ENCODE measurements at regions of chr6 and their contacts with region 1.

Region 1: GRCh38 chr6:28940858-28941680 is 17.3 kb upstream of the TRIM27 start:
- DNase-seq: peak; percentile 89
- ATAC-seq: peak; percentile 76
- H3K4me3 Mint-ChIP-seq: peak overlapping the region; percentile 89
- H3K27ac Mint-ChIP-seq: peak overlapping the region; percentile 96
- H3K4me1 Mint-ChIP-seq: peaks cover 44% of the 10 kb centered on the region
- H3K27me3 Mint-ChIP-seq: no peaks in the 10 kb centered on the region

Region 2: DNA sequence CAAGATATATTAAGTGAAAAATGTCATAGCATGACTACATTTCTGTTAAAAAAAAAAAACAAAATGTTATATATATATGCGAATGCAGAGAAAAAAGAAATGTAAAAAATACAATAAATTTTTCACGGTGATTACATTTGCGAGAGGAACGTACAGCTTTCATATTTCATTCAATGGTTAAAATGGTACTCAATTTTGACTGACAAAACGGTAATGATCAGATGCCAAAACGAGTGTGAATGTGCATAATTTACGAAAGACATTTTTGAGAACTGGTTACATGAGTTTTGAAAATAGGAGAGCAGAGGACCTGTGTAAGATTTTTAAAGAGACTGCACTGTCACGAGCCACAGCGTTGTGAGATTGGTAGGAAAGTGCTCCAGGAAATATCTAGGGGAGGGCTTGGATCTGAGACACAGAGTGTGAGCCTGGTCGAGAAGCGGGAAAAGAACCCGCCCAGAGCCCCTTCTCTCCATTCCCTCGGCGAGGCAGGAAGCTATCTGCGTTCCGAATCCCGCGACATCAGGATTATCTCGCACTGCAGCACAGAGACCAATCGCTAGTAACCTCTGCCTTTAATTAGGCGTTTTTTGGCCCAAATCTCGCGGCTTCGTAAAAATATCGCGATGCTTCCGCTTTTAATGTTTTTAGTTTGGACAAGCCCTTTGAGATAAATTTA is 45.8 kb before region 1 on chr6:
- CTCF ChIA-PET with region 1: interaction called, 23 read pairs
- DNase-seq: peak; percentile 97
- ATAC-seq: peak; percentile 85
- H3K4me3 Mint-ChIP-seq: peak overlapping the region; percentile 99
- H3K27ac Mint-ChIP-seq: peak overlapping the region; percentile 100
- H3K4me1 Mint-ChIP-seq: peaks cover 12% of the 10 kb centered on the region
- H3K27me3 Mint-ChIP-seq: no peaks in the 10 kb centered on the region

Region 3: GRCh38 chr6:28923318-28924102 is 17.6 kb before region 1 on chr6 and contains the start of gene TRIM27:
- CTCF ChIA-PET with region 1: interaction called, 44 read pairs
- DNase-seq: peak; percentile 86
- ATAC-seq: peak; percentile 86
- H3K4me3 Mint-ChIP-seq: peak within 1 kb of the TSS; percentile 93
- H3K27ac Mint-ChIP-seq: peak within 1 kb of the TSS; percentile 93
- H3K4me1 Mint-ChIP-seq: peaks cover 41% of the 10 kb centered on the region
- H3K27me3 Mint-ChIP-seq: peaks cover 3% of the 10 kb centered on the region
- total RNA-seq, gene TRIM27: 52.5 to 62.9 TPM

Region 4: GRCh38 chr6:28981833-28982475 is 40.9 kb after region 1 on chr6:
- CTCF ChIA-PET with region 1: interaction called, 10 read pairs
- DNase-seq: peak; percentile 79
- ATAC-seq: peak; percentile 70
- H3K4me3 Mint-ChIP-seq: peak overlapping the region; percentile 90
- H3K27ac Mint-ChIP-seq: peak overlapping the region; percentile 86
- H3K4me1 Mint-ChIP-seq: peaks cover 54% of the 10 kb centered on the region
- H3K27me3 Mint-ChIP-seq: peaks cover 63% of the 10 kb centered on the region

Region 5: DNA sequence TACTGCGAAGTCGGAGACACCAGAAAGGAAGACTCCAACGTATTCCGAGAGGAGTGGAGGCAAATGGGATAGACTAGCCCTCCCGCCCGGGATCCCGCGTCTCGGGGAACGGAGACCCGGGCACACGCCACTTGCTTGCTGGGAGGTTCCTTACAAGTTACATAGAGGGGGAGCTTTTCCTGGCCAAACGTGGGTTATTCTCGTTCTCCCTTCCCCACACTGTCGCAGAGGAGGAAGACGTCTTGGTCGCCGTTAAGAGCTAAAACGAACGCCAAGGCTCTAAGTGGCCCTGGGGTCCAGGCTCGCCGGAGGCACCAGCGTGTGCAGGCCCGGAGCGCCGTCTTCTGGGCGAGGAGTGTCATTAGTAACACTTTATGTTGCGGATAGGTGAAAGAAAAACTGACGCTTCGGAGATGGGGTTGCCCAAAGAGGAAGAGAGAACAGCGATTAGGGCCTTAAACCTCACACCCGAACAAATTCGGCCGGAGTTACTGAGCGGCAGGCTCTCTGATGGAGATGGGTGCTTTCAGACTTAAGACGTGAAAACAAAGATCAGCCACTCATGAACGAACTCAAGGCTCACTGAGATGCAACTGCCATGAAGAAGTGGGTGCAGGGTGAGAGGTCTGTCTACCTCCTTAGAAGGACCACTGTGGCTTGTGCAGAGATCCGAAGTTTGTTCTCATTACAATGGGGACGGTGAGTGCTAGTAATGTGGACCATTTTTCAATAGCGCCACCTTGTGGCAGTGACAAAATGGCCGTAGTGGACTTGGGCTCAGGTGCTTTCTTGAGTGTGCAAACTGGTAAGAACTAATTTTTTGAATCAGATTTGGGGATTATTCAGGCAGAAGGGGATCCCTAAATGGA is 75.7 kb after region 1 on chr6:
- CTCF ChIA-PET with region 1: interaction called, 14 read pairs
- DNase-seq: peak; percentile 90
- ATAC-seq: peak; percentile 89
- H3K4me3 Mint-ChIP-seq: peak overlapping the region; percentile 82
- H3K27ac Mint-ChIP-seq: peak overlapping the region; percentile 92
- H3K4me1 Mint-ChIP-seq: peaks cover 16% of the 10 kb centered on the region
- H3K27me3 Mint-ChIP-seq: peaks cover 36% of the 10 kb centered on the region

Measured in activated CD8-positive, alpha-beta memory T cell treated with anti-CD3 and anti-CD28 coated beads, Interleukin-2, amount 10 ng/mL, durations not matched to agents 7 days and 5 days (primary cell).